ENCODE measurements at regions of chr11 and their contacts with region 1.

Region 1: DNA sequence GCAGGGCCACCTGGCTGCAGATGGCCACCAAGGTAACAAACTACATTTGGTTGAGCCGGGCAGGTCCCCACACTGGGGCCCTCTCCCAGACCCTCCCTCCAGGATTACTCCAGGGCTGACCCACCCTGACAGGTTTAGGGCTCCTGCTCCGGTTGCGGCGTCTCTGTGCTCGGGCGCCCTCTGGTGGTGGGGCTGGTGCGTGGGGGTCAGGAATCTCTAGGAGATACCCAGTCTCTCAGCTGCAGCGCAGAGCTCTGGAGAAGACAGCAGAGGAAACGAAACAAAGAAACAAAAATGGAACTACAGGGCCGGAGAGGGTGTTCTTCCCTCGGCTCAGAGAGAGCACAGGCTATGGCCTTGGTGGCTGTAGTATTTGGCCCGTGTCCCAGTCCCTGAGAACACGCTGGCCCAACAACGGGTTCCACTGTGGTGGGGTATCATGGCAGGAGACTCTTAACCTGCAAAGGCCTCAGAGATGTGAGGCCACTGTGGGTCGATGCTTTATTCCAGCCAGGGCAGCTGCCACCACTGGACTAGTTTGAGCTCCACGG is 2.4 kb downstream of the C11orf96 start:
- DNase-seq: peak; percentile 84
- ATAC-seq: peak; percentile 44

Region 2: DNA sequence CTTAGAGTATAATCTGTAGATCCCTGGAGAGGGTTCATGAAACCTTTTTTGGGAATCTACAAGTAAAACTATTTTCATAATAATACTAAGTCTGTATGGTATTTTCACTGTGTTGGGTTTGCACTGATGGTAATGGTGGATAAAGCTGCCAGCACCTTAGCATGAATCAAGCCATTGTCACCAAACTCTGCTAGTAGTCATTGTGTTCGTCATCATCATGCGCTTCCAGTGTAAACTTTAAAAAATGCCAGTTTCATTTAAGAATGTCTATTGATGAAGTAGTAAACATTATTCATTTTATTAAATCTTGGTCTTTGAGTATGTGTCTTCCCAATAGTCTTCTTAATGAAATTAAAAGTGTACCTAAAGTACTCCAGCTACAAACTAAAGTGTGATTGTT is 49.2 kb before region 1 on chr11:
- intact Hi-C with region 1: loop called (anchors 10 kb)
- DNase-seq: no peak
- ATAC-seq: no peak

Region 3: DNA sequence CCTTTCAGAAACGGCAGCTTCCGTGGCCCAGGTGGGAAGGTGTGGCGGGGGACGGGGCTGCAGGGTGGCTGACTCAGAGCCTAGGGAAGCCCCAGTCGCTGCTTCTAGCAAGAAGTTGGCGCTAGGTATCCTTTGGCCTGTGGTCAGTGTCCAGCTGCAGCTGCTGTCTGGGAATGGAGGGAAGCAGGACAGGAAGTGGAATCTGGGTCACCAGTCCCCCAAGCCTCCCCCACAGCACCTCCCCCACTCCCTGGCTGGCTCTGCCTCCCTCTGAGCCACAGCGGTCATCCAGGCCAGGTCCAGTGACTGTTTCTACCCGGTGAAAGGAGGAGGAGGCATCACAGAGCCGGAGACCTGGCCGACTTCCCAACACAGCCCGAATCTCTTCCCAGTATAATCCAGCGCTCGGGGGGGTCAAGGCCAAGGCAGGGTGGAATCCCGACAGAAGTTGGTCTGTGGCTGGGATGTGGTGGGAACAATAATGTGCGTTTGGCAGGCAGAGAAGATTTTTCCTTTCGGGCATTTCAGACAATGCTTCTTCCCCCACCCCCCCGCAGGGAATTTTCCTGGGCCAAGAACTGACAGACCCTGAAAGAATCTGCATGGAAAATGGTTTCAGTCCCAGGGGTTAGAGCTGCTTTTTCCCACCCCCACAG is 42.7 kb after region 1 on chr11:
- intact Hi-C with region 1: loop called (anchors 2 kb)
- DNase-seq: peak; percentile 95
- ATAC-seq: peak; percentile 90

Region 4: DNA sequence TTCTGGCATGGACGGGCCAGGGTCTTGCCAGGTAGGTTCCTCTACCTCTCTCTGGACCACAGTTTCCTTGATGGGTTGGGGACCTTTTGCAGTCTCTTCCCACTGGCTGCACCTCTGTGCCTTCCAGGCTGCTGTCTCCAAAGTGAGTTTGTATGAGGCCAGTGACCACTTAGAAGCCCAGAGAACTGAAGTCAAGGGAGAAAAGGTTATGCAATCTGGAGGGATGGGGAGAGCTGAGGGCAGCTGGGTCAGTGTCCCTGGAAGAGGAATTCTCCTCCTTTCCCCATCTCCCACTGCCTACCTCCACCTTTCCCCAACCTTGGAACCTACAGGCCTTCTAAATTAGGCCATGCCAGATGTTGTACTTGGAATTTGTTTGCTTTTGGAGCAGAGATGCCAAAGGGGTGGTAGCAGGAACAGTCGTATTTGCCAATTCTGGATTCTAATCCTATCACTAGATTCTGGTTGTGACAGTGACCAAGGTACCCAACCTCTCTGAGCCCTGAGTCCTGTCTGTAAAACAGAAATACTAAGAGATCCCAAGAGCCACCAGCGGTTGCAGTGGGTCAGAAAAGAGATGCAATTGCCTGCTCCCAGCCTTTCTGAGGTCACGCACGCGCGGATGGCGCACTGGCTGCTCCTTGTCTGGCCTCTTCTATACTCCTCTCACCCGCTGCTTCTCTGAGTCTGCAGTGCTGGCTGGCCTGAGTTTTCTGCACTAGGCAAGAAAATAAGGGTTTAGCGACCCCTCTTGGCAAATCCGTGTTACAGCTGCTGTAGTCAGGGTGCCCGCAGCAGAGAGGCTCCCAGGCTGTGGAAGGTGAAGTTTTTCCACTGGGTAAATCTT is 92.2 kb after region 1 on chr11:
- intact Hi-C with region 1: loop called (anchors 5 kb)
- DNase-seq: peak; percentile 89
- ATAC-seq: peak; percentile 93

Measured in Right ventricle myocardium superior (tissue), 1 donor.